Naive thymus-derived CD4-positive, alpha-beta T cell (primary cell): ENCODE measurements at regions of chr17 and their contacts with region 1.

Region 1: DNA sequence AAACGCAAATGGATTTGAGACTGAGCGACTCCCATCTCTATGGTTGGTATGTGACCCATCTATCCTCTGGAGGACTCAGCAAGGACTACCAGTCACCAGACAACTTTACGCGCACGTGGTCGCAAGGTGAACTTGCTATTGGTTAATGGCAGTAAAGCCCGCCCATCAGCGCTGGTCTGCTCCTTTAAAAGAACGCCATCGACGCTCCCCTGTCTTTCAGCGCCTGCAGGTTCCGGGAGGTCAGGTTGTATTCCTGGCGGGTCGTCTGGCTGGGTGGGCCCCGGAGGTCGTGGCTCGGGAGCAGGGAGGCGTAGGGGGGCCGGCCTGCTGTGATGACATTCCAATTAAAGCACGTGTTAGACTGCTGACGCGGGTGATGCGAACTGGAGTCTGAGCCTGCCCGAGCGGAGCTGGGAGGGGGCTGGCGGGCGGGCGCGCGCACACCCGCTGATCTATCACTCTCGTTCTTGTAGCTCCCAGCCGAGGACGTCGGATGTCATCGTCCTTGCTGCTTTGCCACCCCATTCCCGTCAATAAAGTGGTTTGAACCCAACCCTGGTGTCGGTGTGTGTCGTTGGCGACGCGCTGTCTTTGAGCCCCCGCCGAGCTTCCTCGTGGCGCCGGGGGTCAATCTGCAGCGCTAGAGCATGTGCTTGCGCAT is 15.9 kb upstream of the ERN1 start:
- DNase-seq: peak; percentile 85 to 99 (median 96)
- ATAC-seq: peak; percentile 98
- H3K4me3 ChIP-seq: peak overlapping the region; percentile 72
- H3K4me3 Mint-ChIP-seq: no peak overlapping the region
- H3K27ac ChIP-seq: peak overlapping the region; percentile 91
- H3K27ac Mint-ChIP-seq: no peak overlapping the region
- H3K4me1 ChIP-seq: peaks cover 11 to 12% of the 10 kb centered on the region in 2 donors
- H3K4me1 Mint-ChIP-seq: peaks cover 11 to 34% (median 27%) of the 10 kb centered on the region in 7 donors
- H3K27me3 ChIP-seq: no peaks in the 10 kb centered on the region
- H3K27me3 Mint-ChIP-seq: no peaks in the 10 kb centered on the region

Region 2: GRCh38 chr17:63407741-63408330 is 738.1 kb before region 1 on chr17:
- CTCF ChIA-PET with region 1: no interaction called
- POLR2A ChIA-PET with region 1: no interaction called
- intact Hi-C with region 1: no loop called
- DNase-seq: no peak
- ATAC-seq: no peak
- H3K4me3 ChIP-seq: no peak overlapping the region
- H3K4me3 Mint-ChIP-seq: no peak overlapping the region
- H3K27ac ChIP-seq: no peak overlapping the region
- H3K27ac Mint-ChIP-seq: no peak overlapping the region
- H3K4me1 ChIP-seq: no peaks in the 10 kb centered on the region
- H3K4me1 Mint-ChIP-seq: peaks cover 0 to 6% (median 4%) of the 10 kb centered on the region in 7 donors
- H3K27me3 ChIP-seq: no peaks in the 10 kb centered on the region
- H3K27me3 Mint-ChIP-seq: peaks cover 0 to 26% (median 0%) of the 10 kb centered on the region in 5 donors

Region 3: DNA sequence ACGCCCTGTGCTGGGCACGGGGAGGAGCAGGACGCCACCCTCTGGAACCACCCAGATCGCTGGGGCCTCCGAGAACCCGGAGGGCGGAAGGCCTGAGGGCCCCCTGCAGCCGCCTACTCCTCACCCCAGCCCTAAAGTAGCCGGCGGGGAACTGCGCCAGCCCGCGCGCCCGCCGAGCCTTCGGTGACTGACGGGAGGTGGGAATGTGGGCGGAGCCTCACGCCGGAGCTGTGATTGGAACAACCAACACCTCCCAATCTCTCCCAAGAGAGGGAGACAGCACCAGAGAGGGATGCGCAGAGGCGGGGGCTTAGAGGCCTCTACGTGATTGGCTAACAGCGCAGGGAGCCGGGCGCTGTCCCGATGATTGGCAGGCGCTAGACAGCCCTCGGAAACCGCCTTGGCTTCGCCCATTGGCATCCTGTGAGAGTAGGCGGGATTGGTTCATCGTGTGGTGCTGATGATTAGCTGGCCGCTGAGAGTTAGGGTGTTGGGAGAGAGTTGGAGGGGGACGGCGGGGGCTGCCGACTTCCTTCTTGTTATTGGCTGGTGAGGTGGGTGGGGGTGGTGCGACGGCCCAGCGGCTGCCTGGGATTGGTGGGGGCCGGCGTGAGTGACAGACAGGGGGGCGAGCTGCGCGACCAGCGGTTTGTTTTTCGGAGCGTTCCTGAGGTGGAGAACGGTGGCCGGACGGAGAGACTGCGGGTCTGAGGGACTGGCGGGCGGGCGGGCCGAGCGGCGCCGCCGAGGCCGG is 523.9 kb before region 1 on chr17 and contains the start of gene MAP3K3:
- CTCF ChIA-PET with region 1: no interaction called
- POLR2A ChIA-PET with region 1: no interaction called
- intact Hi-C with region 1: loop called in 1 of 2 experiments (anchors 10 kb)
- DNase-seq: peak; percentile 79 to 99 (median 98)
- ATAC-seq: peak; percentile 93
- H3K4me3 ChIP-seq: peak within 1 kb of the TSS; percentile 82
- H3K4me3 Mint-ChIP-seq: peak within 1 kb of the TSS; percentile 96 to 100 (median 99)
- H3K27ac ChIP-seq: peak within 1 kb of the TSS; percentile 75
- H3K27ac Mint-ChIP-seq: peak within 1 kb of the TSS; percentile 83 to 97 (median 95)
- H3K4me1 ChIP-seq: peaks cover 21 to 31% of the 10 kb centered on the region in 2 donors
- H3K4me1 Mint-ChIP-seq: peaks cover 34 to 48% (median 42%) of the 10 kb centered on the region in 7 donors
- H3K27me3 ChIP-seq: peaks cover 0 to 3% of the 10 kb centered on the region in 2 donors
- H3K27me3 Mint-ChIP-seq: peaks cover 0 to 12% (median 0%) of the 10 kb centered on the region in 5 donors
- total RNA-seq, gene MAP3K3: 37.5 to 105 (median 85.5) TPM

Region 4: GRCh38 chr17:63919311-63919723 is 226.6 kb before region 1 on chr17:
- CTCF ChIA-PET with region 1: interaction called, 3 read pairs
- POLR2A ChIA-PET with region 1: interaction called, 8 read pairs
- intact Hi-C with region 1: loop called (anchors 5 kb)
- DNase-seq: peak; percentile 53 to 81 (median 68)
- ATAC-seq: peak; percentile 97
- H3K4me3 ChIP-seq: no peak overlapping the region
- H3K4me3 Mint-ChIP-seq: no peak overlapping the region
- H3K27ac ChIP-seq: no peak overlapping the region
- H3K27ac Mint-ChIP-seq: peak overlapping the region in 8 of 9 donors; percentile 3 to 86 (median 8)
- H3K4me1 ChIP-seq: peaks cover 0 to 4% of the 10 kb centered on the region in 2 donors
- H3K4me1 Mint-ChIP-seq: peaks cover 5 to 10% (median 9%) of the 10 kb centered on the region in 7 donors
- H3K27me3 ChIP-seq: no peaks in the 10 kb centered on the region
- H3K27me3 Mint-ChIP-seq: peaks cover 0 to 16% (median 0%) of the 10 kb centered on the region in 5 donors

Region 5: GRCh38 chr17:64051153-64051552 is 94.7 kb before region 1 on chr17:
- CTCF ChIA-PET with region 1: no interaction called
- POLR2A ChIA-PET with region 1: interaction called, 65 read pairs
- intact Hi-C with region 1: loop called in 1 of 2 experiments (anchors 1 kb)
- DNase-seq: peak in 7 of 9 donors; percentile 58 to 86 (median 76)
- ATAC-seq: peak; percentile 99
- H3K4me3 ChIP-seq: peak overlapping the region; percentile 19
- H3K4me3 Mint-ChIP-seq: peak overlapping the region; percentile 1 to 73 (median 60)
- H3K27ac ChIP-seq: peak overlapping the region; percentile 55
- H3K27ac Mint-ChIP-seq: peak overlapping the region; percentile 86 to 97 (median 95)
- H3K4me1 ChIP-seq: peaks cover 32 to 37% of the 10 kb centered on the region in 2 donors
- H3K4me1 Mint-ChIP-seq: peaks cover 26 to 52% (median 43%) of the 10 kb centered on the region in 7 donors
- H3K27me3 ChIP-seq: no peaks in the 10 kb centered on the region
- H3K27me3 Mint-ChIP-seq: no peaks in the 10 kb centered on the region

Region 6: GRCh38 chr17:64129764-64130558 is 15.9 kb before region 1 on chr17 and contains the start of gene ERN1:
- CTCF ChIA-PET with region 1: interaction called, 18 read pairs
- POLR2A ChIA-PET with region 1: interaction called, 173 read pairs
- intact Hi-C with region 1: loop called (anchors 1 kb)
- DNase-seq: peak; percentile 84 to 93 (median 91)
- ATAC-seq: peak; percentile 96
- H3K4me3 ChIP-seq: peak within 1 kb of the TSS; percentile 69
- H3K4me3 Mint-ChIP-seq: peak within 1 kb of the TSS; percentile 85 to 97 (median 94)
- H3K27ac ChIP-seq: peak within 1 kb of the TSS; percentile 77
- H3K27ac Mint-ChIP-seq: peak within 1 kb of the TSS; percentile 83 to 98 (median 93)
- H3K4me1 ChIP-seq: peaks cover 12 to 32% of the 10 kb centered on the region in 2 donors
- H3K4me1 Mint-ChIP-seq: peaks cover 28 to 57% (median 53%) of the 10 kb centered on the region in 7 donors
- H3K27me3 ChIP-seq: no peaks in the 10 kb centered on the region
- H3K27me3 Mint-ChIP-seq: no peaks in the 10 kb centered on the region
- total RNA-seq, gene ERN1: 52.6 to 110 (median 62.9) TPM

Region 7: DNA sequence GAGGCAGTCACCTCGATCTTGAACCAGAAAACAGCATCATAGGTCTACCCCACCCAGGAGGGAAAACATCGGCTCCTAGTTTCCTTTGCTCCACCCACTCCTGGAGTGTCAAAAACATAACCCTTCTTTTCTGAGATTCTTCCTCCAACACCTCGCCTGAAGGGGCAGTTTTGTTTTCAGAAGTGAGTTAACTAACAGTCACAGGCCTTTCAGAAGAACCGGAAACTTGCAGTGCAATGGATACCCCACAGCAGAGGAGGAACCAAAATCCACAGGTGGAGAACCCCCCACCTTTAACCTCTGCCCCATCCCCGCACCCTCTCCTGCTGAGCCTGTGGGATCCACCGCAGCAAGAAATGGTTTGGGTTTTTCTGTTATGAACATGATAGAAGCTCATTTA is 125.0 kb after region 1 on chr17:
- CTCF ChIA-PET with region 1: interaction called, 3 read pairs
- POLR2A ChIA-PET with region 1: interaction called, 30 read pairs
- intact Hi-C with region 1: no loop called
- DNase-seq: peak in 3 of 9 donors; percentile 5 to 11 (median 9)
- ATAC-seq: peak; percentile 49
- H3K4me3 ChIP-seq: no peak overlapping the region
- H3K4me3 Mint-ChIP-seq: peak overlapping the region; percentile 33 to 68 (median 52)
- H3K27ac ChIP-seq: no peak overlapping the region
- H3K27ac Mint-ChIP-seq: peak overlapping the region; percentile 47 to 88 (median 83)
- H3K4me1 ChIP-seq: peaks cover 0 to 16% of the 10 kb centered on the region in 2 donors
- H3K4me1 Mint-ChIP-seq: peaks cover 6 to 43% (median 35%) of the 10 kb centered on the region in 7 donors
- H3K27me3 ChIP-seq: no peaks in the 10 kb centered on the region
- H3K27me3 Mint-ChIP-seq: peaks cover 0 to 19% (median 5%) of the 10 kb centered on the region in 5 donors

Region 8: DNA sequence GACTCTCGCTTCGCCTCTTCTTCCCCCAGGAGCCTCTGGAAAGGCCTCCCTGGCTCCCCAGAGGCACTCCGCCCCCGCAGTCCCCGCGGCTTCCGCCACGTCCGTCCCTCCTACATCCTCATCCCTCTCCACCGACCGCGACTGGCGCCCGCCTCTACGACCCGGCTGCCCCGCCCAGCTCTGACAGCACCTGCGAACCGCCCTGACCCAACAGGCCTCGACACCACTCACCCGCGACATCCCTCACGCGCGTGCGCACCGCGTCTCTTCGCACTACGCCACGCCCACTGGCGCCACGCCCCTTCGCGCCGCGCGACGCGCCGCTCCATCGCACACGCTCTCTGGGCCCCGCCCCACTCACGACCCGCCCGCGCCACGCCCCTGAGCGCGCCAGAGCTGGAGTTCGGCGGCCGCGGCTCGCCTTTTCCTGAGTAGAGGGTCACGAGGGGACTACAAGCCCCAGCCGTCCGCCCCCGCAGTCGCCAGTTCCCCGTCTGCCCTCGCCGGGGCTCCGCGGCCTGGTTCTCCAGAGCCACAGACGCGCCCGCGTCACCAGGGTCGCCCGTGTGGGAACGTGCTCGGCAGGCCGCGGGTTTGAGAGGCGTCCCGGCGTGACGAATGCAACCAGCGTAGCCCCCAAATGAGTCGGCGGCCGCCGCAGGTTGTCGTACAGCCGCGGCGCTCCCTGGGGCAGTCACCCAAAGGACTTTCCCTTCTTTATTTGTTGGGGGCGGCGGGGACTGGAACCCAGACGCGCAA is 829.6 kb after region 1 on chr17:
- CTCF ChIA-PET with region 1: no interaction called
- POLR2A ChIA-PET with region 1: no interaction called
- intact Hi-C with region 1: loop called in 1 of 2 experiments (anchors 5 kb)
- DNase-seq: peak; percentile 94 to 99 (median 98)
- ATAC-seq: peak; percentile 92
- H3K4me3 ChIP-seq: peak overlapping the region; percentile 82
- H3K4me3 Mint-ChIP-seq: peak overlapping the region; percentile 88 to 100 (median 96)
- H3K27ac ChIP-seq: peak overlapping the region; percentile 99
- H3K27ac Mint-ChIP-seq: peak overlapping the region; percentile 96 to 100 (median 99)
- H3K4me1 ChIP-seq: peaks cover 8 to 27% of the 10 kb centered on the region in 2 donors
- H3K4me1 Mint-ChIP-seq: peaks cover 19 to 50% (median 33%) of the 10 kb centered on the region in 7 donors
- H3K27me3 ChIP-seq: no peaks in the 10 kb centered on the region
- H3K27me3 Mint-ChIP-seq: no peaks in the 10 kb centered on the region